Common myeloid progenitor, CD34-positive (primary cell): ENCODE measurements at regions of chr20 and their contacts with region 1.

Region 1: GRCh38 chr20:34111702-34112599 is at the start of gene EIF2S2:
- DNase-seq: peak; percentile 99 to 100 (median 99)
- H3K4me3 ChIP-seq: peak within 1 kb of the TSS; percentile 82 to 98 (median 95)
- H3K27ac ChIP-seq: peak within 1 kb of the TSS; percentile 94 to 99
- H3K4me1 ChIP-seq: peaks cover 10 to 34% (median 19%) of the 10 kb centered on the region in 4 experiments
- H3K27me3 ChIP-seq: no peaks in the 10 kb centered on the region

Region 2: DNA sequence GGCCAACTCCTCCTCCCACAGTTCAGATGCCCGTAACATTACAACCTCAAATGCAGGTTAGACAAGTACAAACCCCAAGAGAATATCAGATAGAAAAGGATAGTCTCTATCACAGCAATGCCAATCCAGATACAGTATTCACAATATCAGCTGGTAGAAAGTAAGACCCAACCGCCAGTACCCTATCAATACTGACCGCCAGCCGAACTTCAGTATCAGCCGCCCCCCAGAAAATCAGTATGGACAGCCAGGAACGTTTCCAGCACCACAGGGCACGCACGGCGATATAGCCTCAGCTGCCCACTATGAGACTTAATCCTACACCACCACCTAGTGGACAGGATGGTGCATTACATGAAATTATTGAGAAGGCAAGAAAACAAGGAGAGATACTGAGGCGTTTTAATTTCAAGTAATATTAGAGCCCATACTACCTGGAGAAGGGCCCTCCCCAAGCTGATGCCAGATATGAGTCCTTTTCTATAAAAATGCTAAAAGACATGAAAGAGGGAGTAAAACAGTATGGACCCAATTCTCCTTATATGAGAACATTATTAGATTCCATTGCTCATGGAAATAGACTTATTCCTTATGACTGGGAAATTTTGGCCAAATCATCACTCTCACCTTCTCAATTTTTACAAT is 17.7 kb after region 1 on chr20:
- CTCF ChIA-PET with region 1: interaction called, 4 read pairs
- POLR2A ChIA-PET with region 1: interaction called, 12 read pairs
- DNase-seq: peak; percentile 63 to 82 (median 79)
- H3K4me3 ChIP-seq: peak overlapping the region in 3 of 7 experiments; percentile 32 to 54 (median 36)
- H3K27ac ChIP-seq: no peak overlapping the region
- H3K4me1 ChIP-seq: peaks cover 0 to 4% (median 1%) of the 10 kb centered on the region in 4 experiments
- H3K27me3 ChIP-seq: no peaks in the 10 kb centered on the region